Gastrocnemius medialis (tissue), 4 donors: ENCODE measurements at regions of chr12 and their contacts with region 1.

Region 1: GRCh38 chr12:116222358-116222757 is 55.1 kb downstream of the MED13L start:
- DNase-seq: peak; percentile 62 to 67
- ATAC-seq: peak; percentile 79 to 87
- H3K4me3 ChIP-seq: no peak overlapping the region
- H3K27ac ChIP-seq: peak overlapping the region in 1 of 4 donors; percentile 39
- H3K4me1 ChIP-seq: peaks cover 40 to 50% of the 10 kb centered on the region in 2 donors
- H3K27me3 ChIP-seq: no peaks in the 10 kb centered on the region
- CTCF ChIP-seq: no peak
- POLR2A ChIP-seq: no peak

Region 2: GRCh38 chr12:116135209-116135930 is 87.0 kb before region 1 on chr12:
- in situ Hi-C with region 1: loop called in 2 of 4 experiments (anchors 10 to 25 kb)
- intact Hi-C with region 1: no loop called
- DNase-seq: no peak
- ATAC-seq: no peak
- H3K4me3 ChIP-seq: no peak overlapping the region
- H3K27ac ChIP-seq: peak overlapping the region in 2 of 4 donors; percentile 15 to 19
- H3K4me1 ChIP-seq: peaks cover 78 to 83% of the 10 kb centered on the region in 2 donors
- H3K27me3 ChIP-seq: no peaks in the 10 kb centered on the region
- CTCF ChIP-seq: no peak
- POLR2A ChIP-seq: no peak

Region 3: DNA sequence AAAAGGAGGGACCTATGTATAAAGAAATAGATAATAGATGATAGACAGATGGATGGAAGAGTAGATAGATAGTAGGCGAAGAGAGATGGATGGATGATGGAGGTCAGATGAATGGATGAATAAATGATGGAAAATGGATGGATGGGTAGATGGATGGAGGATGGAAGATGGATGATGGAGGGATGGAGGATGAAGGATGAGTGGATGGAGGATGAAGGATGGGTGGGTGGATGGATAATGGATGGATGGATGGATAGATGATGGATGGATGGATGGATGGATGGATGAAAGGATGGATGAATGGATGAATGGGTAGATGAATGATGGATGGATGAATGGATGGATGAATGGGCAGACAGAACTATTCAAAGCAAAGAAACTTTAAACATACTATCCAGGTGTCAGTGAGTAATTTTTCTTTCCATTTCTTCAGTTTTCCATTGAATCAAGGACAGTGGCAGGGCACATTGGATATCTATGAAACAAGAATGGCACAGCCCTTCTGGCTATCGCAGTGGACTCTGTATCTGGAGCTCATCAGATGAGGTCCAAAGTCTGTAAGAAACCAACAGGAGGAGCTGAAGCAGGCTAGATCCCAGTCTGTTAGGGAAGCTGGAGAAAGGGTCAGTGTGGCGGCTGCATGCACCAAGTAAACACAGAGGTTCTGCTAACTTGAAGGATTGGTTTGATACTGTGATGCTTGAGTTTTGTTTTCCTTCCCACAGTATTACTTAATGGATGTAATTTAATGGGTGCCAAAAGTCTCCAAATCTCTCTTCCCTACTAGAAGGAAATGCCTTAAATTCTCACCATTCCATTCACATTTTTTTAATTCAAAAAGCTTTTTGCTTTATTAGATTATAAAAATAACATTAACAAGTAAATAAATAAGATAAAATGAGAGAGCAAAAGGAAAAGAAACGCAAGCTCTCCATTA is 73.2 kb after region 1 on chr12:
- in situ Hi-C with region 1: no loop called
- intact Hi-C with region 1: no loop called
- DNase-seq: no peak
- ATAC-seq: no peak
- H3K4me3 ChIP-seq: no peak overlapping the region
- H3K27ac ChIP-seq: no peak overlapping the region
- H3K4me1 ChIP-seq: no peaks in the 10 kb centered on the region
- H3K27me3 ChIP-seq: no peaks in the 10 kb centered on the region
- CTCF ChIP-seq: no peak
- POLR2A ChIP-seq: no peak